GM12878 (cell line): ENCODE measurements at regions of chr3 and their contacts with region 1.

Region 1: DNA sequence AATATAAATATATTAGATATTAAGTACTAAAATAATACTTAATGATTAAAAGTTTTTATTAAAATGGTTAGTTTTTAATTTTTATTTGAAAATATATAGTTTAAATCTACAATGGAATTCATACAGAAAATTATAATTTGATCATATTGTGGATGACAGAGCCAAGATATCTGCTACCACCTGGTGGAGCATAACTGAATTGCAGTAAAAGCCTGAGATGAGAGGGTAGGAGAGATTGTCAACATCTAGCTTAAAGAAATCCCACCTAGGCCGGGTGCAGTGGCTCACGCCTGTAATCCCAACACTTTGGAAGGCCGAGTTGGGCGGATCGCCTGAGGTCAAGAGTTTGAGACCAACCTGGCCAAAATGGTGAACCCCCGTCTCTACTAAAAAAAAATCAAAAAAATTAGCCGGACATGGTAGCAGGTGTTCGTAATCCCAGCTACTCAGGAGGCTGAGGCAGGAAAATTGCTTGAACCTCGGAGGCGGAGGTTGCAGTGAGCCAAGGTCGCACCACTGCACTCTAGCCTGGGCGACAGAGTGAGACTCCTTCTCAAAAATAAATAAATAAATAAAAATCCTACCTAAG is 25.1 kb upstream of the CSTA start:
- DNase-seq: no peak
- ATAC-seq: peak; percentile 23; the same call in 1 of the 3 replicates
- H3K4me3 ChIP-seq: no peak overlapping the region
- H3K27ac ChIP-seq: peak overlapping the region; percentile 86
- H3K4me1 ChIP-seq: peaks cover 53% of the 10 kb centered on the region
- H3K27me3 ChIP-seq: no peaks in the 10 kb centered on the region
- CTCF ChIP-seq: peak; percentile 52 to 59 (median 57)
- EP300 ChIP-seq: no peak
- POLR2A ChIP-seq: no peak
- RAD21 ChIP-seq: peak; percentile 84

Region 2: DNA sequence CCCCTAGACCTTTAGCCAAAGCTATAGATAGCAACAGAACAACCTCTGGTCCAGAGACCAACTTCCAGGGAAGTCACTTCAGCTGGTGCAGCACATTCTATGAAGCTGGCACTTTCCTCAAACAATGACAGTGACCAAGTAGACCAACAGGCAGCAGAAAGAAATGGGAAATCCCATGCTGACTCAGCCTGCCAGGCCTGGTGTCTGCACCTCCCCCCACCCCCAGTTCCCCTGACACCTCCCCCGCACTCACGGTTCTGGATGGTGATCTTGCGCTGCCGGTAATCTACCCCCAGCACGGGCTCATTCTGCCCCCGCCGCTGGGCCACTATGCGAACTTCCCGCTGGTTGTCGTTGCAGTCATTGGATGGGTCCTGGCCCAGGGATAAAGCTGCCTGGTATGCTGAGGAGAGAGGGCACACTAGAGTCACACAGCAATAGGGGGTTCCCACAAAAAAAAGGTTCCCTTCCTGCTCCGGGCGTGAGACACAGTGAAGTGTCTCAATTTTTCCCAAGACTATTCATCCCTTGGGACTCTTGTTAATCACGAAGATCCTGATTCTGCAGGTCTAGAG is 294.9 kb before region 1 on chr3:
- CTCF ChIA-PET with region 1: interaction called, 3 read pairs
- POLR2A ChIA-PET with region 1: no interaction called
- RAD21 ChIA-PET with region 1: no interaction called
- SMC1A ChIA-PET with region 1: no interaction called
- in situ Hi-C with region 1: no loop called
- intact Hi-C with region 1: loop called (anchors 2 kb)
- DNase-seq: peak; percentile 74
- ATAC-seq: peak; percentile 78
- H3K4me3 ChIP-seq: peak overlapping the region; percentile 46; the same call in 1 of the 2 replicates
- H3K27ac ChIP-seq: peak overlapping the region; percentile 91
- H3K4me1 ChIP-seq: peaks cover 58% of the 10 kb centered on the region
- H3K27me3 ChIP-seq: no peaks in the 10 kb centered on the region
- CTCF ChIP-seq: 0 out of 6 replicates have a peak, but pooled peaks of 1 of the 3 experiments have one; percentile 3
- EP300 ChIP-seq: peak; percentile 11 to 65; a peak in 3 of 4 replicates
- POLR2A ChIP-seq: 0 out of 2 replicates have a peak, but pooled peaks have one; percentile 35
- RAD21 ChIP-seq: no peak

Region 3: DNA sequence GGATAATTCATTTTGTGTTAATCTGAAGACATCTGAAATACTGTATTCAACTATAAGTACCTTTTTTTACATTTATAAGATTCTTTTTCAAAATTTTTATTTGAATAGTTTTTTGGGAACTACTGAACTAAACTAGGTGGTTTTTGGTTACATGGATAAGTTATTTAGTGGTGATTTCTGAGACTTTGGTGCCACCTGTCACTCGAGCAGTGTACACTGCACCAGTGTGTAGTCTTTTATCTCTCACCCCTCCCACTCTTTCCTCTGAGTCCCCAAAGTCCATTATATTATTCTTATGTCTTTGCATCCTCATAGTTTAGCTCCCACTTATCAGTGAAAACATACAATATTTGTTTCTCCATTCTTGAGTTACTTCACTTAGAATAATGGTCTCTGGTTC is 187.2 kb before region 1 on chr3:
- CTCF ChIA-PET with region 1: interaction called, 12 read pairs
- POLR2A ChIA-PET with region 1: no interaction called
- RAD21 ChIA-PET with region 1: interaction called, 3 read pairs
- SMC1A ChIA-PET with region 1: interaction called, 3 read pairs
- in situ Hi-C with region 1: no loop called
- intact Hi-C with region 1: no loop called
- DNase-seq: no peak
- ATAC-seq: peak; percentile 71; the same call in 2 of the 3 replicates
- H3K4me3 ChIP-seq: no peak overlapping the region
- H3K27ac ChIP-seq: no peak overlapping the region
- H3K4me1 ChIP-seq: peaks cover 8% of the 10 kb centered on the region; the same call in 1 of the 2 replicates
- H3K27me3 ChIP-seq: no peaks in the 10 kb centered on the region
- CTCF ChIP-seq: no peak
- EP300 ChIP-seq: no peak
- POLR2A ChIP-seq: no peak
- RAD21 ChIP-seq: no peak

Region 4: GRCh38 chr3:122265957-122266356 is 34.0 kb before region 1 on chr3:
- CTCF ChIA-PET with region 1: interaction called, 37 read pairs
- POLR2A ChIA-PET with region 1: interaction called, 8 read pairs
- RAD21 ChIA-PET with region 1: interaction called, 41 read pairs
- SMC1A ChIA-PET with region 1: interaction called, 204 read pairs
- in situ Hi-C with region 1: no loop called
- intact Hi-C with region 1: loop called (anchors 1 kb)
- DNase-seq: no peak
- ATAC-seq: peak; percentile 11; the same call in 2 of the 3 replicates
- H3K4me3 ChIP-seq: no peak overlapping the region
- H3K27ac ChIP-seq: peak overlapping the region; percentile 43; the same call in 1 of the 2 replicates
- H3K4me1 ChIP-seq: peaks cover 26% of the 10 kb centered on the region
- H3K27me3 ChIP-seq: no peaks in the 10 kb centered on the region
- CTCF ChIP-seq: 0 out of 6 replicates have a peak, but pooled peaks of 1 of the 3 experiments have one; percentile 3
- EP300 ChIP-seq: 0 out of 4 replicates have a peak, but pooled peaks of 1 of the 2 experiments have one; percentile 11
- POLR2A ChIP-seq: no peak
- RAD21 ChIP-seq: peak; percentile 38; the same call in 1 of the 2 replicates

Region 5: GRCh38 chr3:122283796-122284445 is 16.0 kb before region 1 on chr3:
- CTCF ChIA-PET with region 1: interaction called, 15 read pairs
- POLR2A ChIA-PET with region 1: no interaction called
- RAD21 ChIA-PET with region 1: interaction called, 3 read pairs
- SMC1A ChIA-PET with region 1: interaction called, 6 read pairs
- in situ Hi-C with region 1: no loop called
- intact Hi-C with region 1: no loop called
- DNase-seq: no peak
- ATAC-seq: no peak
- H3K4me3 ChIP-seq: no peak overlapping the region
- H3K27ac ChIP-seq: no peak overlapping the region
- H3K4me1 ChIP-seq: no peaks in the 10 kb centered on the region; the same call in 1 of the 2 replicates
- H3K27me3 ChIP-seq: no peaks in the 10 kb centered on the region
- CTCF ChIP-seq: no peak
- EP300 ChIP-seq: no peak
- POLR2A ChIP-seq: no peak
- RAD21 ChIP-seq: no peak

Region 6: GRCh38 chr3:122356415-122356814 is 56.4 kb after region 1 on chr3:
- CTCF ChIA-PET with region 1: interaction called, 192 read pairs
- POLR2A ChIA-PET with region 1: interaction called, 3 read pairs
- RAD21 ChIA-PET with region 1: interaction called, 8 read pairs
- SMC1A ChIA-PET with region 1: interaction called, 191 read pairs
- in situ Hi-C with region 1: no loop called
- intact Hi-C with region 1: loop called (anchors 2 kb)
- DNase-seq: no peak
- ATAC-seq: peak; percentile 72
- H3K4me3 ChIP-seq: no peak overlapping the region
- H3K27ac ChIP-seq: no peak overlapping the region
- H3K4me1 ChIP-seq: no peaks in the 10 kb centered on the region
- H3K27me3 ChIP-seq: no peaks in the 10 kb centered on the region
- CTCF ChIP-seq: peak; percentile 49 to 80 (median 51); a peak in 4 of 6 replicates
- EP300 ChIP-seq: no peak
- POLR2A ChIP-seq: no peak
- RAD21 ChIP-seq: peak; percentile 93